OCI-LY7 (cell line): ENCODE measurements at regions of chr10 and their contacts with region 1.

Region 1: GRCh38 chr10:117360994-117361667 is 14.1 kb downstream of the PDZD8 start:
- DNase-seq: no peak
- H3K4me3 ChIP-seq: no peak overlapping the region
- H3K27ac ChIP-seq: no peak overlapping the region
- H3K4me1 ChIP-seq: peaks cover 12% of the 10 kb centered on the region
- CTCF ChIP-seq: no peak

Region 2: GRCh38 chr10:117350909-117351308 is 10.2 kb before region 1 on chr10:
- CTCF ChIA-PET with region 1: no interaction called
- POLR2A ChIA-PET with region 1: interaction called, 11 read pairs
- intact Hi-C with region 1: no loop called
- DNase-seq: no peak
- H3K4me3 ChIP-seq: no peak overlapping the region
- H3K27ac ChIP-seq: no peak overlapping the region
- H3K4me1 ChIP-seq: peaks cover 11% of the 10 kb centered on the region
- CTCF ChIP-seq: no peak